ENCODE measurements at regions of chr7 and their contacts with region 1.

Region 1: GRCh38 chr7:1990001-1990670 is 242.6 kb downstream of the MAD1L1 start:
- DNase-seq: no peak
- ATAC-seq: no peak
- H3K4me3 ChIP-seq: no peak overlapping the region
- H3K27ac ChIP-seq: no peak overlapping the region
- H3K4me1 ChIP-seq: no peaks in the 10 kb centered on the region
- H3K27me3 ChIP-seq: no peaks in the 10 kb centered on the region
- CTCF ChIP-seq: no peak
- POLR2A ChIP-seq: no peak

Region 2: GRCh38 chr7:1931256-1931950 is 58.7 kb before region 1 on chr7:
- intact Hi-C with region 1: no loop called
- DNase-seq: no peak
- ATAC-seq: no peak
- H3K4me3 ChIP-seq: no peak overlapping the region
- H3K27ac ChIP-seq: no peak overlapping the region
- H3K4me1 ChIP-seq: peaks cover 15% of the 10 kb centered on the region
- H3K27me3 ChIP-seq: no peaks in the 10 kb centered on the region
- CTCF ChIP-seq: no peak
- POLR2A ChIP-seq: no peak

Region 3: GRCh38 chr7:2049782-2050510 is 59.8 kb after region 1 on chr7:
- intact Hi-C with region 1: loop called (anchors 10 kb)
- DNase-seq: no peak
- ATAC-seq: no peak
- H3K4me3 ChIP-seq: no peak overlapping the region
- H3K27ac ChIP-seq: no peak overlapping the region
- H3K4me1 ChIP-seq: no peaks in the 10 kb centered on the region
- H3K27me3 ChIP-seq: no peaks in the 10 kb centered on the region
- CTCF ChIP-seq: no peak
- POLR2A ChIP-seq: no peak

Measured in body of pancreas (tissue), 4 donors.